ENCODE measurements at regions of chr4 and their contacts with region 1.

Region 1: GRCh38 chr4:73869130-73870050 is at the start of gene CXCL1:
- DNase-seq: peak; percentile 52
- H3K4me3 ChIP-seq: peak within 1 kb of the TSS; percentile 49 to 81 (median 67)
- H3K27ac ChIP-seq: peak within 1 kb of the TSS; percentile 55
- H3K4me1 ChIP-seq: peaks cover 35% of the 10 kb centered on the region
- H3K27me3 ChIP-seq: no peaks in the 10 kb centered on the region
- CTCF ChIP-seq: no peak
- POLR2A ChIP-seq: peak; percentile 68
- total RNA-seq, gene CXCL1: 9.0 and 20.0 TPM in 2 replicates

Region 2: DNA sequence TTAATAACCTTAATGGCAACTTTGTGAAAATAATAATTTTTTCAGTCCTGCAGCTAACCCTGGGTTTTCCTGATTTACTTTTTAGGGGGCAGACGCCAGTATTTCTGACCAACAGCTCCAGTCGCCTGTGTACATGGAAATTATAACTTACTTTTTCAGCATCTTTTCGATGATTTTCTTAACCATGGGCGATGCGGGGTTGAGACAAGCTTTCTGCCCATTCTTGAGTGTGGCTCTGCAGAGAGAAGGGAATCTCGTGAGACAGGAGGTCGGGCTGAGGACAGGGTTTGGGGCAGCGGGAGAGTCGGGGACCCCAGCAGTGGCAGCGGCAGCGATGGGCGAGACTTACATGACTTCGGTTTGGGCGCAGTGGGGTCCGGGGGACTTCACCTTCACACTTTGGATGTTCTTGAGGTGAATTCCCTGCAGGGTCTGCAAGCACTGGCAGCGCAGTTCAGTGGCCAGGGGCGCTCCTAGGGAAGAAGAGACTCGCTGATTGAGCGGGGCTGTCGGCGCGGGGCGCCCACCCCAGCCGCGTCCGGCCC is 229.1 kb after region 1 on chr4:
- CTCF ChIA-PET with region 1: interaction called, 4 read pairs
- POLR2A ChIA-PET with region 1: interaction called, 3 read pairs
- dilution Hi-C with region 1: no loop called
- intact Hi-C with region 1: loop called (anchors 10 kb)
- DNase-seq: peak; percentile 38
- H3K4me3 ChIP-seq: peak overlapping the region; percentile 46 to 85 (median 69)
- H3K27ac ChIP-seq: peak overlapping the region; percentile 83
- H3K4me1 ChIP-seq: peaks cover 32% of the 10 kb centered on the region
- H3K27me3 ChIP-seq: no peaks in the 10 kb centered on the region
- CTCF ChIP-seq: no peak
- POLR2A ChIP-seq: no peak

Region 3: DNA sequence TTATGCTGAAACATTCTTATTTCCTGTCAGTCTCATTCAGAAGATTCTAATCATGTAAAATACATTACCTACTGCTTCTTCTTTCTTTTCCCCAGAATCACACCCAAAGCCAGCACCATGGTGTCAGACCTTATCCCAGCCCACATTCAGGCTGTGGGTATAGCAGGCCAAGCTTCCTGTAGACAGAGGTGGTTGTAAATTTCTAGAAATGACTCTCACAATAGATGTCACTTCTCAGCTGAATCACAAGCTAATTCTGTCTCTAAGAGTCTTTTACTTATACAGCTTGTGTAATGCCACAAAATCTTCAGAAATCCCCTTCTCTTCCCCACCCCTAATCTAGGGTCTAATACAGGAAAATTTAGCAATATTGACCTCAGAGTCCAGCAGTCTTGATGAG is 1303.2 kb after region 1 on chr4:
- CTCF ChIA-PET with region 1: no interaction called
- POLR2A ChIA-PET with region 1: no interaction called
- dilution Hi-C with region 1: no loop called
- intact Hi-C with region 1: no loop called
- DNase-seq: no peak
- H3K4me3 ChIP-seq: no peak overlapping the region
- H3K27ac ChIP-seq: no peak overlapping the region
- H3K4me1 ChIP-seq: no peaks in the 10 kb centered on the region
- H3K27me3 ChIP-seq: no peaks in the 10 kb centered on the region
- CTCF ChIP-seq: no peak
- POLR2A ChIP-seq: no peak